PC-3 (cell line): ENCODE measurements at regions of chr18 and their contacts with region 1.

Region 1: GRCh38 chr18:6714010-6714409 is 15.5 kb upstream of the ARHGAP28 start:
- DNase-seq: no peak
- ATAC-seq: peak; percentile 37
- H3K4me3 ChIP-seq: no peak overlapping the region
- H3K27ac ChIP-seq: no peak overlapping the region
- H3K4me1 ChIP-seq: peaks cover 26% of the 10 kb centered on the region
- H3K27me3 ChIP-seq: no peaks in the 10 kb centered on the region
- CTCF ChIP-seq: no peak

Region 2: DNA sequence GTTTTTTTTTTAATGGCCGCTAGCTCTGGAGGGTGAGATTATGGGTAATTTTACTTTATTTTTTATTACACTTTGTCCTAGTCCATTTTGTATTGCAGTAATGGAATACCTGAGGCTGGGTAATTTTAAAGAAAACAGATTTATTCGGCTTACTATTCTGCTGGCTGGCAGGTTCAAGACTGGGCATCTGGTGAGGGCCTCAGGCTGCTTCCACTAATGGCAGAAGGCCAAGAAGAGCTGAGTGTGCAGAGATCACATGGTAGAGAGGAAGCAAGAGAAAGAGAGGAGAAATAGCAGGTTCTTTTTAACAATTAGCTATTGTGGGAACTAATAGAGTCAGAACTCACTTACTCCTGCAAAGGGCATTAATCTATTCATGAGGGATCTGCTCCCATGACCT is 36.9 kb before region 1 on chr18:
- CTCF ChIA-PET with region 1: interaction called, 11 read pairs
- POLR2A ChIA-PET with region 1: no interaction called
- intact Hi-C with region 1: no loop called
- DNase-seq: no peak
- ATAC-seq: no peak
- H3K4me3 ChIP-seq: no peak overlapping the region
- H3K27ac ChIP-seq: no peak overlapping the region
- H3K4me1 ChIP-seq: no peaks in the 10 kb centered on the region
- H3K27me3 ChIP-seq: no peaks in the 10 kb centered on the region
- CTCF ChIP-seq: no peak